ENCODE measurements at regions of chr3 and their contacts with region 1.

Region 1: DNA sequence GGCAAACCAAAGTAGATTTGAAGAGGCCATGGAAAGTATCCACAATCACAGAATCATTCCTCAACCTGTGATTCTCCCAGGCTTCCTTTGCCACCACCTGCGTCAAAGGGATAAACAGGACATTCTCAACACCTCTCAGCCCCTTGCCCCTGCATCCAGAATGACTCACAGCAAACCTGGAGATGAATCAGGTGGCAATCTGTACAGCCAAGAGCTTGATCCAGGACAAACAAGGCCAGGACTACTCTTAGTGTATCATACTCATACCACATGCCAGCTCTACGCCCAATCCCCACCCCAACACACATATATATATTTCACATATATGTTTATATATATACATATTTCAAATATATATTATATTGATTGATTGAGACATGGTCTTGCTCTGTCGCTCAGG is 23.6 kb upstream of the C3orf62 start:
- DNase-seq: no peak
- H3K4me3 ChIP-seq: no peak overlapping the region
- H3K27ac ChIP-seq: no peak overlapping the region
- H3K4me1 ChIP-seq: peaks cover 3 to 4% of the 10 kb centered on the region in 2 donors
- H3K27me3 ChIP-seq: no peaks in the 10 kb centered on the region
- CTCF ChIP-seq: no peak

Region 2: GRCh38 chr3:49313896-49314688 is 13.5 kb after region 1 on chr3:
- intact Hi-C with region 1: no loop called
- DNase-seq: no peak
- H3K4me3 ChIP-seq: no peak overlapping the region
- H3K27ac ChIP-seq: peak overlapping the region in 1 of 2 donors; percentile 19
- H3K4me1 ChIP-seq: no peaks in the 10 kb centered on the region
- H3K27me3 ChIP-seq: no peaks in the 10 kb centered on the region
- CTCF ChIP-seq: no peak

Region 3: DNA sequence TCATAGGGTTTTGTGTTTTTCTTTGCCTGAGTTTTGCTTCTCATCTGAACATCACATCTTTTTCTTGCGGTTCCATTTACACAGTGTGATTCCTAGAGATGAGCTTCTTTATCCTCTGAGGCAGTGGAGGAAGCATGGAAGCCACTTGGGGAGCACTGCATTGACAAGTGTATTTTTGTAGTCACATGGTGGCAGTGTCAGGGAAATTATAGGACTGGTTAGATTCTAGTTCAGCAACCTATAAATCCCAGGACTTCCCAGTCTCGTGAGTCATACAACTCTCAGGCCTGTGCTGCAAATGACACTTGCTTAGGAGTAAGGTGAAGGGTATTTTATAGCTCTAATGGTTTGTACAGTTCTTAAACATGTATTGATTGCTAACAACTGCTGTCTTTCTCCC is 697.7 kb after region 1 on chr3:
- intact Hi-C with region 1: loop called (anchors 10 kb)
- DNase-seq: no peak
- H3K4me3 ChIP-seq: no peak overlapping the region
- H3K27ac ChIP-seq: no peak overlapping the region
- H3K4me1 ChIP-seq: no peaks in the 10 kb centered on the region
- H3K27me3 ChIP-seq: no peaks in the 10 kb centered on the region
- CTCF ChIP-seq: no peak

Measured in ascending aorta (tissue), 2 donors.